Panc1 (cell line): ENCODE measurements at regions of chr3 and their contacts with region 1.

Region 1: DNA sequence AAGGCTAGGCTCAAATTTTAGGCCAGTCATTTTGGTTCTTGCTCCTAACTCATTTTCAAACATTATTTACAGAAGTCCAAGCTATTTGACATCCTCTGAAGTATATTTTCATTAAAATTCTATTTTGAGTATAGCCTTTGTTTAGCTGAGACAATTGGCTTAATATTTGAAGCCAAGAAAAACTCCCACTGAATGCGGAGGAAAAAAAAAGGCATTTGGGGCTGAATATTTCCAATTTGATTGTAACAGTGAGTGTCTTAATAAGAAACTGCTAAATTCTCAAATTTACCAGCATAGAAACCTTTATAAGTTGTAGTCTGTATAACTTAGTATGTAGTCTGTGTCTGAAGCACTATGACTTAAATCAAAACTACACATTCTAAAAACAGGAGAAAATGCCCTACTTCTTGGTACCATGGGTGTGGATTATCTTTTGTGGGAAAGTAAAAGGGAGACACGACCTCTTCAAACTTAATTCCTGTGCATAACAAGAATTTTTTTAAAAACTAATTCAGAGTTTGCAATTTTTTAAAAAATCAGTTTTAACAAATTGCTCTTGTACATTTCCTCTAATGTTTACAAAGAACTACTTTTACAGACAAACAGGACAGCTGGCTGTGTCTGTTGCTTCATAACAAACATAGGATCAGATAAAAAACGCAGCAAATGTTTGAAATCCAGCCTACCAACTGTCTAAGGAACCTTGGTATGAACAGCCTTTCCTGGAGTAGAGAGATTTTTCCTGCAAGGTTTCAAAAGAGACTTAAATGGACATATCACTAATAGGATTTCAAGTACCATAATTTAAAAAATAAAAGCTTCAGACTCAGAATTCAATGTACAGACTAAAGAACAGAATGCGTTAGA is 52.7 kb upstream of the LMOD3 start:
- DNase-seq: no peak
- ATAC-seq: no peak
- H3K4me3 ChIP-seq: no peak overlapping the region
- H3K27ac ChIP-seq: no peak overlapping the region
- H3K4me1 ChIP-seq: no peaks in the 10 kb centered on the region
- H3K27me3 ChIP-seq: no peaks in the 10 kb centered on the region
- CTCF ChIP-seq: no peak

Region 2: DNA sequence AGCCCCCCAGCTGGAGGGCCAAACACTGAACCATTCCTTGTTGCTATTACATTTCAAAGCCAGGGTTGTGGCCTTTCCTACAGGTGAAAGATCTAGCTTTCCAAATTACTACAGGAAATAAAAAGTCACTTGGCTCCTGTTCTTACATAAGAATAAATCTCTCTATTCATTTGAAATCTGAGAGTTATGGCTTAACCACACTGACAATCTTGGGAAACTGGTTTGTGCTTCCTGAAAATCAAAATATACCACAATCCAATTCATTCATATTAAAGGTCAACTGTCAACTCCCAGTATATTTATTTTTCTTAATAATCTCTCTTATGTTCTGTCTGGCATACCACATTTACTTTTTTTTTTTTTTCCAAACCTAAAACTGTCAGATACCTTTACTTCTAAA is 51.0 kb after region 1 on chr3:
- CTCF ChIA-PET with region 1: no interaction called
- POLR2A ChIA-PET with region 1: interaction called, 14 read pairs
- in situ Hi-C with region 1: no loop called
- intact Hi-C with region 1: no loop called
- DNase-seq: no peak
- ATAC-seq: no peak
- H3K4me3 ChIP-seq: no peak overlapping the region
- H3K27ac ChIP-seq: no peak overlapping the region
- H3K4me1 ChIP-seq: no peaks in the 10 kb centered on the region
- H3K27me3 ChIP-seq: no peaks in the 10 kb centered on the region
- CTCF ChIP-seq: no peak

Region 3: DNA sequence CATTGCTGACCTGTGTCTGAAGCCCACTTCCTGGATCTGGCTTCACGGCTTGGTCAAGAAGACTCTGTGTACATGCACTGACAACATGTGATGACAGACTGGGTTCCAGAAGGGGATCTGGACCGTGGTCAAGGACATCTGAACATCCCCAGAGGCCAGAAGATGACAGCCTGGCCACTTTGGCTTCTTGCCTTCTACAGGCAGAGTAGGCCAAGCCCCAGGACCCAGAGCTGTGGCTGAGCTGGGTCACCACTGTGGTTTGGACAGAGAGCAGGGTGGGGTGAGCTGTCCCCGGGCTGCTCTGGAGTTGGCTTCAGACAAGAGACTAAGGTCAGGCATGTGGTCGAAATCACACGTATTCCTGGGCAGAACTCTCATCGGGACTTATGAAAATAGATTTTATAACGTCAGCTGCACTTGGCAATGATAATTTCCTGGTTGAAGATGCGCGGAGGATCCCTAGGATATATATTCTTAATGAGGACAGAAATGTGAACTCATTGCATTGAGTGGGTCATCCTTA is 324.9 kb after region 1 on chr3:
- CTCF ChIA-PET with region 1: no interaction called
- POLR2A ChIA-PET with region 1: no interaction called
- in situ Hi-C with region 1: no loop called
- intact Hi-C with region 1: no loop called
- DNase-seq: no peak
- ATAC-seq: no peak
- H3K4me3 ChIP-seq: no peak overlapping the region
- H3K27ac ChIP-seq: no peak overlapping the region
- H3K4me1 ChIP-seq: no peaks in the 10 kb centered on the region
- H3K27me3 ChIP-seq: no peaks in the 10 kb centered on the region
- CTCF ChIP-seq: no peak